MCF 10A (cell line): ENCODE measurements at regions of chr6 and their contacts with region 1.

Region 1: DNA sequence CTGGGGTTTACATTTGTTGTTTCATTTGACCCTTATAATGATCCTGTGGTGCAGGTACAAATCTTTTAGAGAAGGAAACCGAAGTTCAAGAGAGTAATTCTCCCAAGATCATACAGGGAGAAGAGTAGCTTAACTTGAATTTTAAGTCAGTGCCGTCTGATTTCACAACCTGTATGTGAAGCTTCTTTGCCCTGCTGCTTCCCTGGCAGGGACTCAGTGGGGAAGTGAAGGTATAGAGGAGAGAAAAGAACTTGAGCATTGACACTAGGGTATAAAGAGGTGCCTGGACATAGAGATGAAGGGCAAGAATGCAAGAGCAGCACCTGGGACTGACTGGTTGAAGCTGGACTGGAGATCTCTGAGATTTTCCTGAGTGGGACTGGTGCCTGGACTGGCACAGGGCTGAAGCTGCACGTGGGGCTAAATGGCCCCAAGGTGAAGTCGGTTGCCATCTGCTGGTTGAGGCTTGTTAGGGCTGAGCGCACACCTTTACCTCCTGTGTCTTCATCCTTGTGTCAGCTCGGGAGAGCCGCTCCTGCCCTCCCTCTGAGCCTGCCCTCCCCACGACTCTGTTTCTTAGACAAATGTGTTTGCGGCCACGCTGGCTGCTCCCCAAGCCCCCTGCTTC is 41.8 kb downstream of the FARS2 start:
- DNase-seq: peak; percentile 78
- H3K4me3 Mint-ChIP-seq: no peak overlapping the region
- H3K27ac Mint-ChIP-seq: no peak overlapping the region
- H3K4me1 Mint-ChIP-seq: peaks cover 13% of the 10 kb centered on the region
- H3K27me3 Mint-ChIP-seq: no peaks in the 10 kb centered on the region
- CTCF ChIP-seq: peak; percentile 74

Region 2: GRCh38 chr6:5053038-5053437 is 250.1 kb before region 1 on chr6:
- CTCF ChIA-PET with region 1: interaction called, 8 read pairs
- POLR2A ChIA-PET with region 1: no interaction called
- intact Hi-C with region 1: loop called (anchors 1 kb)
- DNase-seq: no peak
- H3K4me3 Mint-ChIP-seq: no peak overlapping the region
- H3K27ac Mint-ChIP-seq: no peak overlapping the region
- H3K4me1 Mint-ChIP-seq: peaks cover 6% of the 10 kb centered on the region
- H3K27me3 Mint-ChIP-seq: no peaks in the 10 kb centered on the region
- CTCF ChIP-seq: no peak

Region 3: GRCh38 chr6:5214570-5215052 is 88.5 kb before region 1 on chr6:
- CTCF ChIA-PET with region 1: interaction called, 4 read pairs
- POLR2A ChIA-PET with region 1: no interaction called
- intact Hi-C with region 1: loop called (anchors 1 kb)
- DNase-seq: peak; percentile 38
- H3K4me3 Mint-ChIP-seq: no peak overlapping the region
- H3K27ac Mint-ChIP-seq: no peak overlapping the region
- H3K4me1 Mint-ChIP-seq: no peaks in the 10 kb centered on the region
- H3K27me3 Mint-ChIP-seq: no peaks in the 10 kb centered on the region
- CTCF ChIP-seq: peak; percentile 71

Region 4: GRCh38 chr6:5270093-5270680 is 32.9 kb before region 1 on chr6:
- CTCF ChIA-PET with region 1: interaction called, 15 read pairs
- POLR2A ChIA-PET with region 1: no interaction called
- intact Hi-C with region 1: no loop called
- DNase-seq: no peak
- H3K4me3 Mint-ChIP-seq: no peak overlapping the region
- H3K27ac Mint-ChIP-seq: no peak overlapping the region
- H3K4me1 Mint-ChIP-seq: peaks cover 21% of the 10 kb centered on the region
- H3K27me3 Mint-ChIP-seq: no peaks in the 10 kb centered on the region
- CTCF ChIP-seq: no peak

Region 5: DNA sequence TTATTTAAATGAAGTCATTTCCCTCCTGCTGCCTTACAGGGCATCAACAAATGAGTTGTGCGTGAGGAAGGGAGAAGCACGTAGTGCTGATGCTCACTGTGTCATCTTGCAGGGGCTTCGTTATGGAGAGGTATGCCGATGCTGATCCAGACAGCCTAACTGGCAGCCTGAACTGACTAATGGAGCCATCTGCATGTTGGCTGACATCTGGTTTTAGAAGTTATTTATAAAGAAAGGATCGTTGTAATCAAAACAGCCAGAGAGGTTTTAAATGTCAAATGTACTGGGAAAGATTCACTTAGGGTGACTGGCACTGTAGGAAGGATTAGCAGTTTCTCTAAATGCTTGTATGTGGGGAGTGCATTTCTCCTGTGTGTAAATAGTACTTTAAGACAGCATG is 12.8 kb after region 1 on chr6:
- CTCF ChIA-PET with region 1: interaction called, 13 read pairs
- POLR2A ChIA-PET with region 1: interaction called, 5 read pairs
- intact Hi-C with region 1: no loop called
- DNase-seq: no peak
- H3K4me3 Mint-ChIP-seq: no peak overlapping the region
- H3K27ac Mint-ChIP-seq: no peak overlapping the region
- H3K4me1 Mint-ChIP-seq: peaks cover 5% of the 10 kb centered on the region
- H3K27me3 Mint-ChIP-seq: no peaks in the 10 kb centered on the region
- CTCF ChIP-seq: no peak

Region 6: GRCh38 chr6:5361396-5361795 is 58.3 kb after region 1 on chr6:
- CTCF ChIA-PET with region 1: no interaction called
- POLR2A ChIA-PET with region 1: no interaction called
- intact Hi-C with region 1: no loop called
- DNase-seq: peak; percentile 22
- H3K4me3 Mint-ChIP-seq: no peak overlapping the region
- H3K27ac Mint-ChIP-seq: no peak overlapping the region
- H3K4me1 Mint-ChIP-seq: peaks cover 9% of the 10 kb centered on the region
- H3K27me3 Mint-ChIP-seq: no peaks in the 10 kb centered on the region
- CTCF ChIP-seq: no peak